Transverse colon (tissue), 4 donors: ENCODE measurements at regions of chr1 and their contacts with region 1.

Region 1: GRCh38 chr1:3431266-3431665 is 23.2 kb upstream of the ARHGEF16 start:
- DNase-seq: no peak
- H3K4me3 ChIP-seq: no peak overlapping the region
- H3K27ac ChIP-seq: no peak overlapping the region
- H3K4me1 ChIP-seq: no peaks in the 10 kb centered on the region
- H3K27me3 ChIP-seq: no peaks in the 10 kb centered on the region
- CTCF ChIP-seq: no peak
- EP300 ChIP-seq: no peak
- POLR2A ChIP-seq: no peak

Region 2: DNA sequence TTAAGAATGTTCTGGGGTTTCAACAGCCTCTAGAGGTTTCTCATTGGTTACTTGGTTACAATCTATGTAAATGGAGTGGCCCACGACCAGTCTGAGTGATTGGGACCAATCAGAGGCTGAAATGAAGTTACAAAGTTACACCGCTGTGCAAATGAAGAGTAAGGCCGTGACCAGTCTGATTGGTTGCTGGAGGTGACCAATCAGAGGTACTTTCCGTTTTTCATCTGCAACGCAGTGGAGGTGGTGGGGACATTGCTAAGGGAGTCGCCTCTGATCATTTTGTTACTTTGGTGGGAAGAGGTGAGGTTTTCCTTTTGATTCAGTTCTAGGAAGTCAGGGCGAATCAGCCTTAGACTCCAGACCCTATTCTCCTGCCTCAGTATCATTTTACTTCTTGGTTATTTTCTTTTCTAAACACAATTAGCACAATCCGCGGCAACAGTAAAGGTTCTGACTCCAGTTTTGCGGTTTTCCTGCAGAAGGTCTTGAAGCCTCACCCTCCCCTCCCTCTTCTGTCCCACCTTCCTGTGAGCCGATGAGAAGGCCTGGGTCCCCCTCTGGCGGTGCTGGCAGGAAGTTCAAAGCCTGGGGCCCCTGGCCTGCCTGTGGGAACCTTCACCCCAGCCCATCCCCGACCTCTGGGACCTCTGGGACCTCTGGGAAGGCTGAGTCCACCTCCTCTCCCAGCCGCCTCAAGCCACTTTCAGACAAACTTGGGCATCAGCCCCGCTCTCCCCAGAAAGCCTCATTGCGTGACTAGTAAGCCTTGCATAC is 591.0 kb before region 1 on chr1:
- in situ Hi-C with region 1: loop called in 1 of 4 experiments (anchors 25 kb)
- intact Hi-C with region 1: no loop called
- DNase-seq: no peak
- H3K4me3 ChIP-seq: no peak overlapping the region
- H3K27ac ChIP-seq: no peak overlapping the region
- H3K4me1 ChIP-seq: peaks cover 0 to 7% (median 0%) of the 10 kb centered on the region in 4 donors
- H3K27me3 ChIP-seq: no peaks in the 10 kb centered on the region
- CTCF ChIP-seq: no peak
- EP300 ChIP-seq: no peak
- POLR2A ChIP-seq: no peak

Region 3: GRCh38 chr1:2906085-2906484 is 525.2 kb before region 1 on chr1:
- in situ Hi-C with region 1: no loop called
- intact Hi-C with region 1: no loop called
- DNase-seq: no peak
- H3K4me3 ChIP-seq: no peak overlapping the region
- H3K27ac ChIP-seq: no peak overlapping the region
- H3K4me1 ChIP-seq: no peaks in the 10 kb centered on the region
- H3K27me3 ChIP-seq: peaks cover 14% of the 10 kb centered on the region
- CTCF ChIP-seq: no peak
- EP300 ChIP-seq: no peak
- POLR2A ChIP-seq: no peak